Caco-2 (cell line): ENCODE measurements at regions of chr5 and their contacts with region 1.

Region 1: GRCh38 chr5:16234598-16234997 is 55.0 kb upstream of the MARCHF11 start:
- DNase-seq: no peak
- H3K4me3 ChIP-seq: no peak overlapping the region
- H3K4me3 Mint-ChIP-seq: no peak overlapping the region
- H3K27ac Mint-ChIP-seq: no peak overlapping the region
- H3K4me1 ChIP-seq: no peaks in the 10 kb centered on the region
- H3K4me1 Mint-ChIP-seq: no peaks in the 10 kb centered on the region
- H3K27me3 ChIP-seq: no peaks in the 10 kb centered on the region; the same call in 1 of the 2 replicates
- H3K27me3 Mint-ChIP-seq: peaks cover 12% of the 10 kb centered on the region
- CTCF ChIP-seq: no peak

Region 2: GRCh38 chr5:16120579-16120978 is 114.0 kb before region 1 on chr5:
- CTCF ChIA-PET with region 1: no interaction called
- POLR2A ChIA-PET with region 1: no interaction called
- intact Hi-C with region 1: no loop called
- DNase-seq: no peak
- H3K4me3 ChIP-seq: no peak overlapping the region
- H3K4me3 Mint-ChIP-seq: no peak overlapping the region
- H3K27ac Mint-ChIP-seq: no peak overlapping the region
- H3K4me1 ChIP-seq: no peaks in the 10 kb centered on the region
- H3K4me1 Mint-ChIP-seq: no peaks in the 10 kb centered on the region
- H3K27me3 ChIP-seq: no peaks in the 10 kb centered on the region
- H3K27me3 Mint-ChIP-seq: peaks cover 15% of the 10 kb centered on the region
- CTCF ChIP-seq: no peak

Region 3: GRCh38 chr5:16207908-16208307 is 26.7 kb before region 1 on chr5:
- CTCF ChIA-PET with region 1: no interaction called
- POLR2A ChIA-PET with region 1: interaction called, 10 read pairs
- intact Hi-C with region 1: no loop called
- DNase-seq: no peak
- H3K4me3 ChIP-seq: no peak overlapping the region
- H3K4me3 Mint-ChIP-seq: no peak overlapping the region
- H3K27ac Mint-ChIP-seq: no peak overlapping the region
- H3K4me1 ChIP-seq: no peaks in the 10 kb centered on the region
- H3K4me1 Mint-ChIP-seq: no peaks in the 10 kb centered on the region
- H3K27me3 ChIP-seq: no peaks in the 10 kb centered on the region
- H3K27me3 Mint-ChIP-seq: peaks cover 12% of the 10 kb centered on the region
- CTCF ChIP-seq: no peak